ENCODE measurements at regions of chr2 and their contacts with region 1.

Region 1: DNA sequence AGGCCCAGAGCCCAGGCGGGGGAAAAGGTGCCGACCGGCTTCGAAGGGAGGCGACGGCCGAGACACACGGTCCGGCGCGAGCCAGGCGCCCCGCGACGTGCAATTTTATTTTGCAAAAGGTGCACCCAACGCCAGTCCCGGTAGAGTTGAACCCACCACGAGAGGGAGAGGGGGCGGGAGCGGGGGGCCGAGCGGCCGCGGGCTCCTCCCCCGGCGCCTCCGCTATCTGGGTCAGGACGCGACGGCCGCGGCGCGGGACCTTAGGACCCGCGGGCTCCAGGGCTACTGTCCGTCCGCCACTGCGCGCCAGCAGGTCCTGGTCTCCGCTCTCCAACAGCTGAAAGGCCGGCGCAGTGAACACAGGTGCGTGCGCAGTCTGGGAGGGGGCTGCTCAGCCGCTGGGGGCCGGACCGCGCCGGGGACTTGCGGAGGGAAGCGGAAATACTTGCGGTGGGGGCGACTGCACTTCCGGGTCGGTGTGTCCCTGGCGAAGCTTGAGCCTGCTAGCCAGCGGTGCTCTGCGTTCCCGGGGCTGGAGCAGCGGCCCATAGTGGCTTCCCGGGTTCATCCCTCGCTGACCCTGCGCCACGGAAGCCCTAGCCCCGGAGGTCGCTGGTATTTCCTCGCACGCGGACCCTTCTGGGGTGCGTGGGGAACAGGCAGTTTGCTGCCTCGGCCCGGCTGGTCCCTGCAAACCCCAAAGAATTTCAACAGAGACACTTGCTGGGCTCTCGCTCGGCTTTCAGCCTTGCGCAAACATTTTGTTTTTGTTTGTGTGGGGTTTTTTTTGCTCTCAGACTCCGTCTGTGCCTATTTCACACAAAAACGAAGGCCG is at the start of gene RMDN2:
- DNase-seq: peak; percentile 89
- ATAC-seq: peak; percentile 90
- H3K4me3 Mint-ChIP-seq: peak within 1 kb of the TSS; percentile 97
- H3K27ac Mint-ChIP-seq: peak within 1 kb of the TSS; percentile 96
- H3K4me1 Mint-ChIP-seq: peaks cover 9% of the 10 kb centered on the region
- H3K27me3 Mint-ChIP-seq: peaks cover 3% of the 10 kb centered on the region
- total RNA-seq, gene RMDN2: 2.5 to 2.7 TPM

Region 2: GRCh38 chr2:37549598-37549997 is 375.7 kb before region 1 on chr2:
- CTCF ChIA-PET with region 1: no interaction called
- POLR2A ChIA-PET with region 1: no interaction called
- intact Hi-C with region 1: no loop called
- DNase-seq: no peak
- ATAC-seq: no peak
- H3K4me3 Mint-ChIP-seq: no peak overlapping the region
- H3K27ac Mint-ChIP-seq: no peak overlapping the region
- H3K4me1 Mint-ChIP-seq: peaks cover 11% of the 10 kb centered on the region
- H3K27me3 Mint-ChIP-seq: no peaks in the 10 kb centered on the region

Region 3: DNA sequence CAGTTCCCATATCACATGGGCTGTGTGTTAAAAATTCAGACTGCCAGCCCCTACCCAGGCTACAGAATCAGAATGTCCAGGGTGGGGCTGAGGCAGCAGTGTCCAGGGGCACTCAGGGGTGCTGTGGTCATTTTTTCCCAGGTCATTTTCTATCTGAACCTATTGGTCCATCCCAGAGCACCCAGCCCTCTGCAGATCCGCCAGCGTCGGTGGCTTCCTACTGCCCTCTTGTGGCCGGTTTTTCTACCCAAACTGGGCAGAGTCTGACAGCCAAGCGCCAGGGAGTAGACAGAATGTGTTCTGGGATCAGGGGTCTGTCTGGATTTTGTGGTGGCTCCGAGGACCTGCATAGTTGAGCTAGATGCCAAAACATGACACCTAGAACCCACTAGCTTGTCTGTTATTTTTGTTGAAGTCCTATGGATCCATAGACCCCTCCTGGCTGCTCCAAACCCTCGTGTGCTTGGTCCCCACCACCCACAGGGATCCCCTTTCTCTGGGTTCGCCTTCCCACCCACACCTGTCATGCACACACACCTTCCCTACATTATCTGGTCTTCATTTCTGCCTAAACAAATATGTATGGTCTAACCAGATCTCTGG is 34.3 kb before region 1 on chr2:
- CTCF ChIA-PET with region 1: interaction called, 4 read pairs
- POLR2A ChIA-PET with region 1: no interaction called
- intact Hi-C with region 1: loop called in 1 of 2 experiments (anchors 2 kb)
- DNase-seq: peak; percentile 83
- ATAC-seq: peak; percentile 43
- H3K4me3 Mint-ChIP-seq: no peak overlapping the region
- H3K27ac Mint-ChIP-seq: no peak overlapping the region
- H3K4me1 Mint-ChIP-seq: peaks cover 46% of the 10 kb centered on the region
- H3K27me3 Mint-ChIP-seq: peaks cover 8% of the 10 kb centered on the region

Region 4: GRCh38 chr2:38109732-38110181 is 184.5 kb after region 1 on chr2:
- CTCF ChIA-PET with region 1: no interaction called
- POLR2A ChIA-PET with region 1: no interaction called
- intact Hi-C with region 1: no loop called
- DNase-seq: no peak
- ATAC-seq: no peak
- H3K4me3 Mint-ChIP-seq: no peak overlapping the region
- H3K27ac Mint-ChIP-seq: no peak overlapping the region
- H3K4me1 Mint-ChIP-seq: peaks cover 21% of the 10 kb centered on the region
- H3K27me3 Mint-ChIP-seq: peaks cover 30% of the 10 kb centered on the region